A673 (cell line): ENCODE measurements at regions of chr1 and their contacts with region 1.

Region 1: DNA sequence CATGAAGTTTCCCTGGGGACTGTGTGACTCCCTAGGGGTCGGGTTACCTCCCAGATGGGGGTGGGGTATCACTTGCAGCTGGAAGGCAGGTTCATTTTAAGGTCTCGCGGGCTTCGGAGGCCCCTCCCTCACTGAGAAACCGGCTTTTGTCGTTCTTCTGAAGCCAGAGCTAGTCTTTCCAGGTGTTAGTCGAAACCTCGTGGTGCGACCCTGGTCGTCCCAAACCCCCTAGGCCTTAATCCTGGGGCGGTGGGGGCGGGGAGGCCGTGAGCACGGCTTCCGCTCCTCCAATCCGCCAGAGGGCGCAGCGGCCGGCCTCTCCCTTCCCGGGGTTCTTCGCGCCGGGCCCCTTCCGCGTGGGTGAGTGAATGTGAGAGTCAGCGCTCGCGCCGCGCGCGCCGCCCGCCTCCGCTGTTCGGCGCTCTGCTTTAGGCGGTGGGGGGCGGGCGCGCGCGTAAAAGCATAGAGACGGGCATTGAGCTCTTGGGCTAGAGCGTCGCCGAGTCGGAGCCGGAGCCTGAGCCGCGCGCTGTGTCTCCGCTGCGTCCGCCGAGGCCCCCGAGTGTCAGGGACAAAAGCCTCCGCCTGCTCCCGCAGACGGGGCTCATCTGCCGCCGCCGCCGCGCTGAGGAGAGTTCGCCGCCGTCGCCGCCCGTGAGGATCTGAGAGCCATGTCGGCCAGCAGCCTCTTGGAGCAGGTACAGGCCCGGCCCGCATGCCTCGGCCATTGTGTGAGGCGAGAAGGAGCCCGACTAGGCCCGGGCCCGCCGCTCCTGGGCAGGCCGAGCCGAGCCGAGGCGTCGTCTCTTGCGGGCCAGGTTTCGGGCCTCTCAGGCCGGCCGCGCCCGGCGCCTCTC is at the start of gene YTHDF2:
- DNase-seq: peak; percentile 99
- H3K4me3 ChIP-seq: peak within 1 kb of the TSS; percentile 77
- H3K27ac ChIP-seq: peak within 1 kb of the TSS; percentile 94
- H3K4me1 ChIP-seq: peaks cover 32% of the 10 kb centered on the region
- H3K27me3 ChIP-seq: no peaks in the 10 kb centered on the region
- CTCF ChIP-seq: peak; percentile 97
- total RNA-seq, gene YTHDF2: 99.6 and 111 TPM in 2 replicates

Region 2: DNA sequence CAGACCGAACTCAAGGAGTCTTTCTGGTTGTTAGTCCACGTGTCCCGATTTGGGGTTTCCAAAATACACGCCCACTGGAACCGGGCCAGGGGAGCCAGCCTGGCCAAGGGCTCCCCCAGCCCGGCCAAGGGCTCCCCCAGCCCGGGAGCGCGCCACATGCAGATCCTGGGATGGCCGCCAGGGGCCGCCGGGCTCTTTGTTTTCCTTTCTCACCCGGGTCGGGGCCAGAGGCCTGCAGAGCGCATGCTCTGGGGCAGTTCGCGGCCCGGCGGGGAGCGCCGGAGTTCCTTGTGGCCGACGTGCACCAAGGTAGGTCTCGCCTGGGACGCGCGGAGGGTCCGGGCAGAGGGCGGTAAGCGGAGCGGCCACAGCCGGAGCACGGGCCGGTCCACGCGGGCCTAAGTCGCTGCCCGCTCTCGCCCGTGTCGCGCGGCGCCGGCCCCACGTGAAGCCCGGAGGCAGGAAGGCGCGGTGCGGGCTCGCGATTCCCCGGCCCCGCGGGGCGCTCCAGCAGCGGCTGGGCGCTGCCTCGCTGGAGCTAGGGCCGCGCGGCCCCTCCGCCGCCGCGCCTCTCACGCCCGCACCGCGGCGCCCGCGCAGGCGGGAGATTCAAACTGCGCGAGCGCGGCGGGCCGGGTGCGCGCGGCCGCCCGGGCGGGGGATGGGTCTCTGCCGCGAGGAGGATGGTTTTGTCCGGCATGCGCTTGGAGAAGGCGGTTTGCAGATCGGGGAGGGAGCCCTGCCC is 218.5 kb before region 1 on chr1:
- CTCF ChIA-PET with region 1: interaction called, 4 read pairs
- POLR2A ChIA-PET with region 1: interaction called, 10 read pairs
- intact Hi-C with region 1: no loop called
- DNase-seq: peak; percentile 95
- H3K4me3 ChIP-seq: peak overlapping the region; percentile 66
- H3K27ac ChIP-seq: peak overlapping the region; percentile 96
- H3K4me1 ChIP-seq: peaks cover 14% of the 10 kb centered on the region
- H3K27me3 ChIP-seq: no peaks in the 10 kb centered on the region
- CTCF ChIP-seq: peak; percentile 95

Region 3: GRCh38 chr1:28648474-28649198 is 88.0 kb before region 1 on chr1 and contains the start of gene RNU11:
- CTCF ChIA-PET with region 1: interaction called, 8 read pairs
- POLR2A ChIA-PET with region 1: interaction called, 7 read pairs
- intact Hi-C with region 1: loop called (anchors 2 kb)
- DNase-seq: peak; percentile 98
- H3K4me3 ChIP-seq: peak within 1 kb of the TSS; percentile 40
- H3K27ac ChIP-seq: peak within 1 kb of the TSS; percentile 100
- H3K4me1 ChIP-seq: peaks cover 9% of the 10 kb centered on the region
- H3K27me3 ChIP-seq: no peaks in the 10 kb centered on the region
- CTCF ChIP-seq: no peak; the same call in 1 of the 2 replicates
- total RNA-seq, gene RNU11: not detected in 2 replicates

Region 4: GRCh38 chr1:28682840-28683239 is 53.8 kb before region 1 on chr1:
- CTCF ChIA-PET with region 1: interaction called, 12 read pairs
- POLR2A ChIA-PET with region 1: no interaction called
- intact Hi-C with region 1: no loop called
- DNase-seq: no peak
- H3K4me3 ChIP-seq: no peak overlapping the region
- H3K27ac ChIP-seq: no peak overlapping the region
- H3K4me1 ChIP-seq: no peaks in the 10 kb centered on the region
- H3K27me3 ChIP-seq: no peaks in the 10 kb centered on the region
- CTCF ChIP-seq: no peak

Region 5: DNA sequence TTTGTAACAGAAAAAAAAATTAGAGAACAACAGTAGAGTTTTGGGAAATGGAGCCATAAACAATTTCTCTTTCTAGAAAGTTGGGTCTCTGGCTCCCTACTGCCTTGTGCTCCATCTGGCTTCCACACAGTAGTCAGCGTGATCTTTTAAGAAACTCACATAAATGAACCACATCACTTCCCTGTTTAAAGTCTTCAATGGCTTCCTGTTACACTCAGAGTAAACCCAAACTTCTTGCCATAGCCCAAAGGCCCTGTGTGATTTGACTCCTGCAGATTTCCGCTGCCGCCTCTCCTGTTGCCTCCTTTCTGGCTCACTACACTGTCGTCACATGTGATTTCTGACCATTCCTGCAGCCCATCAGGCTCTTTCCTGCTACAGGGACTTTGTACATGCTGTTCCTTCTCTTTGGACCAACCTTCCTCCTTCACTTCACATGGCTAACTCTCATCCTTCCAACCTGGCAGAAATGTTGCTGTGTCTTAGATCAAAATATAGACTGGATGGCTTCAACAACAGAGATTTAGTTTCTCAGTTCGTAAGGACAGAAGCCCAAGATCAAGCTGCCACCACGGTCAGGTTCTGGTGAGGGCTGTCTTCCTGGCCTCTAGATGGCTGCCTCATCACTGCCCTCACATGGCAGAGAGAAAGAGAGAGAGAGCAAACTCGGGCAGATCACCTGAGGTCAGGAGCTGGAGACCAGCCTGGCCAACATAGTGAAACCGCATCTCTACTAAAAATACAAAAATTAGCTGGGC is 109.3 kb after region 1 on chr1:
- CTCF ChIA-PET with region 1: interaction called, 12 read pairs
- POLR2A ChIA-PET with region 1: no interaction called
- intact Hi-C with region 1: no loop called
- DNase-seq: no peak
- H3K4me3 ChIP-seq: no peak overlapping the region
- H3K27ac ChIP-seq: no peak overlapping the region
- H3K4me1 ChIP-seq: no peaks in the 10 kb centered on the region
- H3K27me3 ChIP-seq: no peaks in the 10 kb centered on the region
- CTCF ChIP-seq: 0 out of 2 replicates have a peak, but pooled peaks have one; percentile 16

Region 6: GRCh38 chr1:28914228-28915030 is 177.8 kb after region 1 on chr1 and contains the start of gene EPB41:
- CTCF ChIA-PET with region 1: no interaction called
- POLR2A ChIA-PET with region 1: no interaction called
- intact Hi-C with region 1: no loop called
- DNase-seq: peak; percentile 99
- H3K4me3 ChIP-seq: peak within 1 kb of the TSS; percentile 89
- H3K27ac ChIP-seq: peak within 1 kb of the TSS; percentile 88
- H3K4me1 ChIP-seq: peaks cover 38% of the 10 kb centered on the region
- H3K27me3 ChIP-seq: no peaks in the 10 kb centered on the region
- CTCF ChIP-seq: no peak
- total RNA-seq, gene EPB41: 337 TPM in 2 replicates